ENCODE measurements at regions of chr17 and their contacts with region 1.

Region 1: DNA sequence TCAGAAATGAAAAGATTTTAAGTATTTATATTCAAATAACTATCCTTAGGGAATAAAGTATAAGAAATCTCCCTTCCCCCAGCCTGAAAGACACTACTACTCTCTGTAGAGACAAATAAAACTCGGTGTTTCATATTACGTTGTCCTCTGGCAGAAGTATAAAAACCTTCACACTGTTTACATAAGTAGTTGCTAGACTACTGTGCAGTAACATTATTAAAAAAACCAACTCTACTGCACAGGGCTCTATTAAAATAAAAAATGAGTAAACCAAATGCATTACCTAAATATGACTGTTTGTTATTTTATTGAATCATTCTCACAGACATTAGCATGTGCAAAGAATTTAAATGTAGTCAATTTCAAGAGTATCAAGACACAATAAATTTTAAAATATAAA is 67.4 kb downstream of the MED13 start:
- DNase-seq: no peak
- ATAC-seq: peak; percentile 96

Region 2: DNA sequence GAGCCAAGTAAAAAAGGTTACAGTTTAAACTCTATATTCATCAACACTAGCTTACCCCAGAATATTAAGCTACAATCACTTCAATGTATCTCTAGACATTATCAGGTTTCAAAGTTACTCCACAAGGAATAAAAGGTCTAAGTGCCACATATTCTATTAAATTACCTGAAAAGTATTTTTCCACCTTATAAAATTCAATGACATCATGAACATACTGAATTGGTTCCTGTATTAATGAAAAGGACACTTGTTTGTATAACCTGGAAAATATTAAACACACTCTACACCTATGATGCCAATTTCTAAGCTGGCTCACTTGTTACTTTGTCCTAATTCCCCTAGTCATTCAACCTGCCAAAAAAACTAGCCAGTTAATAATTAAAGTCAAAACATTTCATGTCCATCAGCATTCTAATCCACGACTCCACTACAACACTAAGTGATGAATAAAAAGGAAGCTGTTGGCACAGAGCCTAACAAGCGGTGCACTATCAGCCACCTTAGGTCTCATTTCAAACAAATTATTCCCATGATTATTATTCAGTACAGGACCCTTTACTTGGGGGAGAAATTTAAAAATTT is 55.2 kb after region 1 on chr17:
- intact Hi-C with region 1: loop called (anchors 10 kb)
- DNase-seq: no peak
- ATAC-seq: no peak